ENCODE measurements at regions of chr10 and their contacts with region 1.

Region 1: GRCh38 chr10:69914398-69915214 is 112.9 kb downstream of the COL13A1 start:
- DNase-seq: peak; percentile 68 to 72
- ATAC-seq: peak; percentile 78 to 99 (median 97)
- H3K4me3 ChIP-seq: no peak overlapping the region
- H3K4me3 Mint-ChIP-seq: no peak overlapping the region
- H3K27ac ChIP-seq: no peak overlapping the region
- H3K27ac Mint-ChIP-seq: no peak overlapping the region
- H3K4me1 ChIP-seq: peaks cover 7% of the 10 kb centered on the region
- H3K4me1 Mint-ChIP-seq: no peaks in the 10 kb centered on the region
- H3K27me3 ChIP-seq: no peaks in the 10 kb centered on the region
- H3K27me3 Mint-ChIP-seq: peaks cover 3 to 13% of the 10 kb centered on the region in 2 donors
- CTCF ChIP-seq: peak; percentile 91

Region 2: GRCh38 chr10:68955832-68956532 is 958.6 kb before region 1 on chr10 and contains the start of gene DDX21:
- intact Hi-C with region 1: no loop called
- DNase-seq: peak; percentile 81 to 94
- ATAC-seq: peak; percentile 84 to 93 (median 87)
- H3K4me3 ChIP-seq: peak within 1 kb of the TSS; percentile 72
- H3K4me3 Mint-ChIP-seq: peak within 1 kb of the TSS; percentile 99
- H3K27ac ChIP-seq: peak within 1 kb of the TSS; percentile 86
- H3K27ac Mint-ChIP-seq: peak within 1 kb of the TSS; percentile 99
- H3K4me1 ChIP-seq: peaks cover 25% of the 10 kb centered on the region
- H3K4me1 Mint-ChIP-seq: peaks cover 31 to 38% of the 10 kb centered on the region in 2 donors
- H3K27me3 ChIP-seq: no peaks in the 10 kb centered on the region
- H3K27me3 Mint-ChIP-seq: no peaks in the 10 kb centered on the region
- CTCF ChIP-seq: peak; percentile 77
- total RNA-seq, gene DDX21: 59.0 to 62.1 (median 59.8) TPM

Region 3: DNA sequence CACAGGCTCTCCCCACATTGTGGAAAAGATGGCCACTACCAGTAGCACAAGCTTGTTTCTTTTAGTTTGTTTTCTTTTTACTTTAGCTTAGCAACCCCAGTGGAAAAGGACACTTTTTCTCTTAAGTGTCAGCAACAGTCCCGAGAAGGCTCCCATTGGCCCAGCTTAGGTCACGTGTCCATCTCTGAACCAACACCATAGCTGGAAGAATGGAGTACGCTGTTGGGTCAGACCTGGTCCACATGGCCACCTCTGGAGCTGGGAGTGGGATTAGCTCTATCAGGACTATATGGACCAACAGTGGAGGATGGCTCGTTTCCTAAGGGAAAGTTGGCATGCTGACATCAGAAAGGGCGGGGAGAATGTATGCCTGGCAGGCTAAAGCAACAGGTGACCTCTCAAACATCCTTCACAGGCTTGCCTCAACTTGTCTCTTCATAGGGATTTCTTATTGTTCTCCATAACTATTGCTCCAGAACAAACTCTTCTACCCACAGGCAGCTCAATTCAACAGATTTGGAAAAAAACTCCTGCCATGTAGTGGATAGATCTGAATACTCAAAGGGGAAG is 313.8 kb before region 1 on chr10:
- intact Hi-C with region 1: no loop called
- DNase-seq: no peak
- ATAC-seq: no peak
- H3K4me3 ChIP-seq: no peak overlapping the region
- H3K4me3 Mint-ChIP-seq: no peak overlapping the region
- H3K27ac ChIP-seq: no peak overlapping the region
- H3K27ac Mint-ChIP-seq: no peak overlapping the region
- H3K4me1 ChIP-seq: no peaks in the 10 kb centered on the region
- H3K4me1 Mint-ChIP-seq: no peaks in the 10 kb centered on the region
- H3K27me3 ChIP-seq: peaks cover 7% of the 10 kb centered on the region
- H3K27me3 Mint-ChIP-seq: peaks cover 43 to 83% of the 10 kb centered on the region in 2 donors
- CTCF ChIP-seq: no peak

Region 4: DNA sequence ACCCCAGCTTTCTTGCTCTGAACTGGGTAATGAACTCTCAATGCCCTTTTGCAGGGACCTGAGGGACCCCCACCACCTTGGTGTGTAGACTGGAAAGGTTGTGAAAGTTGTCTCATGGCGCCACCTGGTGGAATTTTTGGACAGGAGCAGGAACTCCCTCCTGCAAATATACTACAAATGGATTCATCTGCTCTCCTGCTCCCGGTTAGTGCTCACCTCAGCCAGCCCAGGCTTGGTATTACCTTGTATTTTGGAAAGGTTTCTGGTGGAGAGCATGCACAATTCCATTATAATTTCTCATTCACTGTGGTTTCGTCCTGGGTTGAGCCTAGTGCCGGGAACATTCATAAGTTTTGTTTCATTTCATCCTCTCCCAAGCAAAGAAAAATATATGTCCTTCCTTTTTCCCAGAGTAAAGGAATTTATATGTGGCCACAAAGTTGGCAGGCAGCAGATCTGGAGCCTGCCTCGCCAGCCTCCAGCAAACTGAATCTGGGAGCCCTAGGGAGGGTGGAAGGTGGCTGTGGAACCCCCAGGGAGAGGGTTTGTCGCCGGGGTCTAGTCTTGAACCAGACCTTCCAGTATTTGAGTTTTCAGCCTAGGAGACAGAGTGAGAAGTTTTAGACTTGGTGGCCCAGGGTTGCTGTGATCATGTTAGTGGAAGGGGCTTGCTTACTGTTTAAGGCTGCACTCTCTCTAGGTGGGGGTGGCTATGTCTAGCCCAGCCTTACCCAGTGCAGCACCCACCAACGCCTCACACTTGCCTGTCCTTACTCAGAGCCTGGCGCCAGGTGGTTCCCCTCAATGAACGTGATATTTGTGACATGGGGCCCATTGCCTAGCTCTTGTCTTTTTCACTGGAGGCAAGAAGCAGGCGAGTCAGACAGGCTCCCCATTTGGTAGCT is 275.1 kb before region 1 on chr10:
- intact Hi-C with region 1: loop called (anchors 10 kb)
- DNase-seq: peak; percentile 46 to 88
- ATAC-seq: peak in 2 of 3 donors; percentile 38 to 73
- H3K4me3 ChIP-seq: no peak overlapping the region
- H3K4me3 Mint-ChIP-seq: no peak overlapping the region
- H3K27ac ChIP-seq: no peak overlapping the region
- H3K27ac Mint-ChIP-seq: no peak overlapping the region
- H3K4me1 ChIP-seq: no peaks in the 10 kb centered on the region
- H3K4me1 Mint-ChIP-seq: no peaks in the 10 kb centered on the region
- H3K27me3 ChIP-seq: no peaks in the 10 kb centered on the region
- H3K27me3 Mint-ChIP-seq: peaks cover 3 to 8% of the 10 kb centered on the region in 2 donors
- CTCF ChIP-seq: peak; percentile 86

Region 5: GRCh38 chr10:69696073-69696731 is 218.4 kb before region 1 on chr10:
- intact Hi-C with region 1: loop called (anchors 1 kb)
- DNase-seq: peak in 1 of 2 donors; percentile 21
- ATAC-seq: peak in 1 of 3 donors; percentile 26
- H3K4me3 ChIP-seq: no peak overlapping the region
- H3K4me3 Mint-ChIP-seq: no peak overlapping the region
- H3K27ac ChIP-seq: no peak overlapping the region
- H3K27ac Mint-ChIP-seq: no peak overlapping the region
- H3K4me1 ChIP-seq: no peaks in the 10 kb centered on the region
- H3K4me1 Mint-ChIP-seq: no peaks in the 10 kb centered on the region
- H3K27me3 ChIP-seq: peaks cover 4% of the 10 kb centered on the region
- H3K27me3 Mint-ChIP-seq: peaks cover 5 to 7% of the 10 kb centered on the region in 2 donors
- CTCF ChIP-seq: peak; percentile 33

Region 6: GRCh38 chr10:69786791-69787190 is 127.8 kb before region 1 on chr10:
- intact Hi-C with region 1: loop called (anchors 1 kb)
- DNase-seq: peak in 1 of 2 donors; percentile 17
- ATAC-seq: peak; percentile 59 to 92 (median 92)
- H3K4me3 ChIP-seq: no peak overlapping the region
- H3K4me3 Mint-ChIP-seq: no peak overlapping the region
- H3K27ac ChIP-seq: no peak overlapping the region
- H3K27ac Mint-ChIP-seq: peak overlapping the region in 1 of 2 donors; percentile 78
- H3K4me1 ChIP-seq: peaks cover 5% of the 10 kb centered on the region
- H3K4me1 Mint-ChIP-seq: peaks cover 14 to 15% of the 10 kb centered on the region in 2 donors
- H3K27me3 ChIP-seq: peaks cover 2% of the 10 kb centered on the region
- H3K27me3 Mint-ChIP-seq: peaks cover 0 to 2% of the 10 kb centered on the region in 2 donors
- CTCF ChIP-seq: peak; percentile 53